Body of pancreas (tissue), 4 donors: ENCODE measurements at regions of chr9 and their contacts with region 1.

Region 1: GRCh38 chr9:71819115-71819739 is 50.9 kb upstream of the CEMIP2 start:
- DNase-seq: peak; percentile 43 to 58 (median 50)
- ATAC-seq: no peak
- H3K4me3 ChIP-seq: no peak overlapping the region
- H3K27ac ChIP-seq: no peak overlapping the region
- H3K4me1 ChIP-seq: no peaks in the 10 kb centered on the region
- H3K27me3 ChIP-seq: no peaks in the 10 kb centered on the region
- CTCF ChIP-seq: peak in 6 of 7 experiments; percentile 62 to 81 (median 70)
- POLR2A ChIP-seq: no peak

Region 2: GRCh38 chr9:71285191-71285656 is 534.0 kb before region 1 on chr9:
- intact Hi-C with region 1: loop called (anchors 5 kb)
- DNase-seq: peak; percentile 35 to 64 (median 42)
- ATAC-seq: peak; percentile 81
- H3K4me3 ChIP-seq: no peak overlapping the region
- H3K27ac ChIP-seq: no peak overlapping the region
- H3K4me1 ChIP-seq: no peaks in the 10 kb centered on the region
- H3K27me3 ChIP-seq: no peaks in the 10 kb centered on the region
- CTCF ChIP-seq: peak; percentile 63 to 87 (median 81)
- POLR2A ChIP-seq: no peak

Region 3: GRCh38 chr9:71604197-71605063 is 214.8 kb before region 1 on chr9:
- intact Hi-C with region 1: loop called (anchors 10 kb)
- DNase-seq: peak; percentile 77 to 81 (median 78)
- ATAC-seq: peak; percentile 70
- H3K4me3 ChIP-seq: no peak overlapping the region
- H3K27ac ChIP-seq: no peak overlapping the region
- H3K4me1 ChIP-seq: no peaks in the 10 kb centered on the region
- H3K27me3 ChIP-seq: no peaks in the 10 kb centered on the region
- CTCF ChIP-seq: peak; percentile 43 to 80 (median 73)
- POLR2A ChIP-seq: no peak

Region 4: DNA sequence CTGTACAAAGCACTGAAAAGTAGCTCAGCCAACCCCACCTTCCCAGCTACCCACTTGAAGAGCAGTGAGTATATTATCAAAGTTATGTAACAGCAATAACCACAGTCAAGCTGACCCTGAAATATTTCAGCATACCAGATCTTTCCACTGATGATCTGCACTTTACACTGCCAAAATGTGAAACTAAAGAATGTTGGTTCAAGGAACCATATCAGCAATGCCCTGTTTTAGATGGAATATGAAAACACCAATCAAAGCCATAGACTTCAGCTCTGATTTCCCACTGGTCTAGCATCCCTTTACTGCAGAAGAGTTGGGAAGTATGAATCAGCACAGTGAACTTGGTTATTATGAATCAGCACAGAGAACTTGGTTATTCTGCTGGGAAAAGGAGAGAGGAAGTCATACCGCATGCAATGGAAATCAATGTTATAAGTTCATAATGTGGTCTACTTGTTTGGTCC is 70.9 kb before region 1 on chr9:
- intact Hi-C with region 1: no loop called
- DNase-seq: no peak
- ATAC-seq: no peak
- H3K4me3 ChIP-seq: no peak overlapping the region
- H3K27ac ChIP-seq: no peak overlapping the region
- H3K4me1 ChIP-seq: peaks cover 17% of the 10 kb centered on the region
- H3K27me3 ChIP-seq: no peaks in the 10 kb centered on the region
- CTCF ChIP-seq: no peak
- POLR2A ChIP-seq: no peak